ENCODE measurements at regions of chr1 and their contacts with region 1.

Region 1: DNA sequence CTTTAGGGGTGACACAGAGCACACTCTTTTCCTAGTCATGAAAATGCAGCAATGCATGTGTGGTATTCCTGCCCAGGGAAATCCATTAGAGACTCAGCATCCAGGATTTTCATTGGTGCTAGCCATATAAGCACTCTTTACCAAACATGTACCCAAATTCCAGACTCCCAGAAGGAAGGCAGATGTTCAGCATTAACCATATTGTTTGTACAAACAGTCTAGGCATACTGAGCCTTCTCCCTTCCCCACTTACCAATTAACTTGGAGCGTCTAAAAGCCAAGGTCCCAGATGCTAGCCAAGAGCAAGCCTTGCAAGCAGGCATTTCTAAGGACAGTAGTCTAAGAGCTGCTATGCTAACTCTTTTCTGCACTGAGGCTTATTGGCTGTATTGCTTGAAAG is 27.9 kb downstream of the ZBED6 start:
- DNase-seq: no peak
- ATAC-seq: no peak
- H3K4me3 ChIP-seq: no peak overlapping the region
- H3K27ac ChIP-seq: no peak overlapping the region
- H3K4me1 ChIP-seq: no peaks in the 10 kb centered on the region
- H3K27me3 ChIP-seq: no peaks in the 10 kb centered on the region
- CTCF ChIP-seq: no peak
- POLR2A ChIP-seq: no peak

Region 2: GRCh38 chr1:203726417-203726867 is 96.9 kb before region 1 on chr1:
- intact Hi-C with region 1: loop called in 1 of 10 experiments (anchors 10 kb)
- DNase-seq: no peak
- ATAC-seq: peak in 3 of 4 donors; percentile 26 to 62 (median 29)
- H3K4me3 ChIP-seq: no peak overlapping the region
- H3K27ac ChIP-seq: no peak overlapping the region
- H3K4me1 ChIP-seq: peaks cover 0 to 4% (median 0%) of the 10 kb centered on the region in 12 donors
- H3K27me3 ChIP-seq: no peaks in the 10 kb centered on the region
- CTCF ChIP-seq: no peak
- POLR2A ChIP-seq: no peak

Region 3: DNA sequence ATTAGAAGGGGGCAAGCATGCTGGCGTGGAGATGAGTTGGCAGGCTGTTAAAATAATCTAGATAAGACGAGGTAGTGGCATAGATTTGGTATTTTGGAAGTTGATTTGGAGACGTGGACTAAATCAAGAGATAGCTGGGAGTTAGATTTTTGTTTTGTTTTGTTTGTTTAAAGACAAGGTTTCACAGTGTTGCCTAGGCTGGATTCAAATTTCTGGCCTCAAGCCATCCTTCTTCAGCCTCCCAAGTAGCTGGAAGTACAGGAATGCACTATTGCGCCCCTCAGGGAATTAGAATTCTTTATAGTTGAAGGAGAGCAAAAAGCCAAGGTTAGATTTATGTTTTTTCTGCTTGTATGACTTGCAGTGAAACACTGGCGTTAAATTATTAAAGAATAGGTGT is 15.8 kb after region 1 on chr1:
- intact Hi-C with region 1: no loop called
- DNase-seq: no peak
- ATAC-seq: no peak
- H3K4me3 ChIP-seq: no peak overlapping the region
- H3K27ac ChIP-seq: peak overlapping the region in 2 of 12 donors; percentile 0 to 22
- H3K4me1 ChIP-seq: peaks cover 0 to 7% (median 0%) of the 10 kb centered on the region in 12 donors
- H3K27me3 ChIP-seq: no peaks in the 10 kb centered on the region
- CTCF ChIP-seq: no peak
- POLR2A ChIP-seq: no peak

Measured in heart left ventricle (tissue), 16 donors.